Prostate gland (tissue), 2 donors: ENCODE measurements at regions of chr7 and their contacts with region 1.

Region 1: GRCh38 chr7:13279854-13280435 is 592.5 kb downstream of the ARL4A start:
- DNase-seq: no peak
- H3K4me3 ChIP-seq: no peak overlapping the region
- H3K27ac ChIP-seq: no peak overlapping the region
- H3K4me1 ChIP-seq: no peaks in the 10 kb centered on the region
- H3K27me3 ChIP-seq: no peaks in the 10 kb centered on the region
- CTCF ChIP-seq: peak in 3 of 4 experiments; percentile 43 to 57 (median 52)
- POLR2A ChIP-seq: no peak

Region 2: DNA sequence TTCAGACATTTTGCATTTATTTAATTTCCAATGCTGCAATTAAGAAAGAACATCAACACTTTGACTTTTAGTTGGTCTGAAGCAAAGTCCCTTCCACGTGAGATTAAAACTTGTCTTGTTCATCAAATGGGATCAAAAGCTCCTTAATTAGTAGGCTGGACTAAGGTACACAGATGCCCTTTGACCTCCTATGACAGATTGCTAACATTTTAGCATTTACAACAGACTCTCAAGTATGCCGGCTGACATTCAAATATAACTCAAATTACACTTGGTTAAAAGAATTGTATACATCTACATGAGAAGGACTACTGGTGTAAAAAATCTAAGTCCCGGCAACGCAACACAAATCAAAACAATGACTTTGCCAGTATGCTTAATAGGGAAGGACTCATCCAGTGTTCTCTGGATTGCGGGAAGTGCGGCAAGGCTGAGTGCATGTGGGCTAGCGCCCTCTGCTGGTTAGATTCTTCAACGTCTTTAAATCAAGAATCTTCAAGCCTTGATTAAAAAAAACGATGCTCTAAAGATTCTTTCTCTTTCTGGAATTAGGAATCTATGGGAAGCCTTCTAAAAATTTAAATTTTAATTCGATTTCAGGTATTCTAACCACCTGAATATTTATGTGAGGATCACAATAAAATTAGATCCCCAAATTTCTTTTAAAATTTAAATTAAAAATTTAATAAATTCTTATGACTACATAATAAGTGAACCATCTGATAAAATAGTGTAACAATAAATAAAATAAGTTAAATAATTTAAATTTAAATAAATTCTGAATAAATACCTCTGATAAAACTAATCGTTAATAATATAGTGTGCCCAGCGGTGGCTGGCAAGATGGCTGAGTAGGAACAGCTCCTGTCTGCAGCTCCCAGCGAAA is 1177.9 kb after region 1 on chr7:
- intact Hi-C with region 1: loop called (anchors 5 kb)
- DNase-seq: peak; percentile 67
- H3K4me3 ChIP-seq: no peak overlapping the region
- H3K27ac ChIP-seq: no peak overlapping the region
- H3K4me1 ChIP-seq: no peaks in the 10 kb centered on the region
- H3K27me3 ChIP-seq: no peaks in the 10 kb centered on the region
- CTCF ChIP-seq: peak; percentile 76 to 88 (median 78)
- POLR2A ChIP-seq: no peak

Region 3: GRCh38 chr7:14691597-14692203 is 1411.8 kb after region 1 on chr7:
- intact Hi-C with region 1: loop called (anchors 5 kb)
- DNase-seq: peak; percentile 34
- H3K4me3 ChIP-seq: no peak overlapping the region
- H3K27ac ChIP-seq: no peak overlapping the region
- H3K4me1 ChIP-seq: no peaks in the 10 kb centered on the region
- H3K27me3 ChIP-seq: no peaks in the 10 kb centered on the region
- CTCF ChIP-seq: peak; percentile 63 to 73 (median 69)
- POLR2A ChIP-seq: no peak